Stomach (tissue), 19 donors: ENCODE measurements at regions of chr6 and their contacts with region 1.

Region 1: GRCh38 chr6:142952614-142953013 is 7.6 kb upstream of the HIVEP2 start:
- DNase-seq: no peak
- H3K4me3 ChIP-seq: no peak overlapping the region
- H3K27ac ChIP-seq: no peak overlapping the region
- H3K4me1 ChIP-seq: peaks cover 0 to 12% (median 0%) of the 10 kb centered on the region in 4 donors
- H3K27me3 ChIP-seq: no peaks in the 10 kb centered on the region
- CTCF ChIP-seq: no peak
- EP300 ChIP-seq: no peak
- POLR2A ChIP-seq: no peak

Region 2: GRCh38 chr6:142255785-142256184 is 696.8 kb before region 1 on chr6:
- intact Hi-C with region 1: no loop called
- DNase-seq: no peak
- H3K4me3 ChIP-seq: no peak overlapping the region
- H3K27ac ChIP-seq: no peak overlapping the region
- H3K4me1 ChIP-seq: no peaks in the 10 kb centered on the region
- H3K27me3 ChIP-seq: no peaks in the 10 kb centered on the region
- CTCF ChIP-seq: no peak
- EP300 ChIP-seq: no peak
- POLR2A ChIP-seq: no peak

Region 3: DNA sequence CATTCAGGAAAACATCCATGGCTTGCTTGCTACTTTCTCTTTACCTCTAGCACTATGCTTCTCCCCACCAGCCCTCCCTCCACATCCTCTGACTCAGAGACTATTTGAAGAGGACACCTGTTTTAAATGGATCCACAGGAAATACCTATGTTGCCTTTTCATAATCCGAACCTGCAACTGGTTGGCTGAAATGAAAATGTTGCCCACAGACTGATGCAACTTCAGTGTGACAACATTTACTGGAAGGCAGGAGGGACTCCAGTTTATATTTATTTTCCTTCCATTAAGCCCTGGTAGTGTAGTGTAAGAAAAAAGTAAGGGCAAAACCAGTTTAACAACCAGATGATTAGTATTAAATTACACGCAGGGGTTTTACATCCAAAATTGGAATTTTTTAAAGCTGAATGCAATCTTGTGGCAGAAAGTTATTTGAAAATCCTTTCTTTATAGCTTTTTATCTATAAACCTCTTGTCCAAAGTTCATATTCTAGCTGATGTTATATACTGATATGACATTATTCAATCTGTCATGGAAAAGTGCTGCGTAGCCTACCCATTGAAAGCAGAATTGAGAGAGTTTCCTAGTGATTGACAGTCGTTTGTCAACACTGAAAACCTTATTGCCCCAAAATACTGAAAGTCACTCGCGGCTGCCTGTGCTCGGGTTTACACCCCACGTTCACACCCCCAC is 107.2 kb after region 1 on chr6:
- intact Hi-C with region 1: loop called (anchors 10 kb)
- DNase-seq: peak in 1 of 2 donors; percentile 72
- H3K4me3 ChIP-seq: peak overlapping the region; percentile 65 to 84 (median 72)
- H3K27ac ChIP-seq: peak overlapping the region; percentile 91 to 94 (median 93)
- H3K4me1 ChIP-seq: peaks cover 0 to 22% (median 20%) of the 10 kb centered on the region in 4 donors
- H3K27me3 ChIP-seq: no peaks in the 10 kb centered on the region
- CTCF ChIP-seq: no peak
- EP300 ChIP-seq: no peak
- POLR2A ChIP-seq: no peak

Region 4: GRCh38 chr6:143279385-143279784 is 326.8 kb after region 1 on chr6:
- intact Hi-C with region 1: no loop called
- DNase-seq: peak in 1 of 2 donors; percentile 38
- H3K4me3 ChIP-seq: no peak overlapping the region
- H3K27ac ChIP-seq: no peak overlapping the region
- H3K4me1 ChIP-seq: peaks cover 0 to 3% (median 0%) of the 10 kb centered on the region in 4 donors
- H3K27me3 ChIP-seq: no peaks in the 10 kb centered on the region
- CTCF ChIP-seq: no peak
- EP300 ChIP-seq: no peak
- POLR2A ChIP-seq: no peak

Region 5: DNA sequence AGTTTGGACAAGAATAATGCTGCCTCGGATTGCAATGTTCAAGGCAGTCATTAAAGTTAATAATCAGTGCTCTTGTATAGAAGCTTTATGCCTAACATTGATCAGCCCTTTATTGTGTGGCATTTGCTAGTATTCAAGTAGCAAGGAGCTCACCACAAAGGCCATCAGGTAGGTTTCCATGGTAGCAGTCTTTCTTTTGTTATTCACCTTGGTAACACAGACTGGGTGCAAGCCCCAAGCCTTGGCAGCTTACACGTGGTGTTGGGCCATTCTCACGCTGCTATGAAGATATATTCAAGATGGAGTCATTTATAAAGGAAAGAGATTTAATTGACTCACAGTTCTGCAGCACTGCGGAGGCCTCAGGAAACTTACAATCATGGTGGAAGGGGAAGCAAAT is 348.6 kb after region 1 on chr6:
- intact Hi-C with region 1: no loop called
- DNase-seq: no peak
- H3K4me3 ChIP-seq: no peak overlapping the region
- H3K27ac ChIP-seq: no peak overlapping the region
- H3K4me1 ChIP-seq: peaks cover 0 to 16% (median 0%) of the 10 kb centered on the region in 4 donors
- H3K27me3 ChIP-seq: no peaks in the 10 kb centered on the region
- CTCF ChIP-seq: no peak
- EP300 ChIP-seq: no peak
- POLR2A ChIP-seq: no peak